ENCODE measurements at regions of chr19 and their contacts with region 1.

Region 1: GRCh38 chr19:47035127-47036096 is 13.0 kb downstream of the TMEM160 start:
- DNase-seq: peak; percentile 93
- H3K4me3 ChIP-seq: peak overlapping the region; percentile 70
- H3K27ac ChIP-seq: peak overlapping the region; percentile 86
- H3K4me1 ChIP-seq: peaks cover 20% of the 10 kb centered on the region
- CTCF ChIP-seq: peak; percentile 92

Region 2: GRCh38 chr19:46856050-46857022 is 179.1 kb before region 1 on chr19:
- CTCF ChIA-PET with region 1: no interaction called
- POLR2A ChIA-PET with region 1: no interaction called
- intact Hi-C with region 1: loop called (anchors 1 kb)
- DNase-seq: peak; percentile 93
- H3K4me3 ChIP-seq: peak overlapping the region; percentile 28
- H3K27ac ChIP-seq: peak overlapping the region; percentile 14
- H3K4me1 ChIP-seq: peaks cover 22% of the 10 kb centered on the region
- CTCF ChIP-seq: peak; percentile 85

Region 3: DNA sequence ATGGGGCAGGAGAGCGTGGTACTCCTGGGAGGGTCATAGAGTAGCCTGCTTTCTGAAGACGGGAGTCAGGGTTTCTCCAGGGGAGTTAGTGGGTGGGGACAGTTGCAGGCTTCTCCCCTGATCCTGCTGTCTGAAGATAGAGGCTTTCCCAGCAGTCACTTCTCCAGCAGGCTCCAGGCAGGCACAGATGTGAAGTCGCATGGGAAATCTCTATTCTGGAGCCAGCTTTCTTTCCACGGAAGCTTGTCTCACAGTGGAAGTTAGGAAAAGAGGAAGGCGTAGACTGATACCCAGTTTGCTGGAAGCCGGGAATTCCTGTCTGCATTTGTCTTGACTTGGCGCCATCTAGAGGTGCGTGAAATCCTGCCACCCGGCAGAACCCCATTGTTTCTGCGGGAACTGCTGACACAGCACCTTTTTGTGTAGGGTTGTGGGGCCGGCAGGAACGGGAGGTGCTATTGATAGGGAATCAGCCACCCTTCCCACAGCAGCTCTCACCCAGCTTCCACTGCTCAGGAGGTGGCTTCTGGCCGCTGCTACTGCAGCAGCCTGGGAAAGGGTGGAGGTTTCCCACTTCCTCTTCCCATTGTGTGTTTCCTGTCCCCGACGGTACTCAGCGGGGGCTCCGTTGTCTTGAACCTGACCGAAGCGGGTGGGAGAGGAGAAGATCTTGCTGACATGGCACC is 44.3 kb before region 1 on chr19:
- CTCF ChIA-PET with region 1: no interaction called
- POLR2A ChIA-PET with region 1: no interaction called
- intact Hi-C with region 1: loop called (anchors 2 kb)
- DNase-seq: peak; percentile 68
- H3K4me3 ChIP-seq: no peak overlapping the region
- H3K27ac ChIP-seq: no peak overlapping the region
- H3K4me1 ChIP-seq: peaks cover 14% of the 10 kb centered on the region
- CTCF ChIP-seq: peak; percentile 95

Region 4: DNA sequence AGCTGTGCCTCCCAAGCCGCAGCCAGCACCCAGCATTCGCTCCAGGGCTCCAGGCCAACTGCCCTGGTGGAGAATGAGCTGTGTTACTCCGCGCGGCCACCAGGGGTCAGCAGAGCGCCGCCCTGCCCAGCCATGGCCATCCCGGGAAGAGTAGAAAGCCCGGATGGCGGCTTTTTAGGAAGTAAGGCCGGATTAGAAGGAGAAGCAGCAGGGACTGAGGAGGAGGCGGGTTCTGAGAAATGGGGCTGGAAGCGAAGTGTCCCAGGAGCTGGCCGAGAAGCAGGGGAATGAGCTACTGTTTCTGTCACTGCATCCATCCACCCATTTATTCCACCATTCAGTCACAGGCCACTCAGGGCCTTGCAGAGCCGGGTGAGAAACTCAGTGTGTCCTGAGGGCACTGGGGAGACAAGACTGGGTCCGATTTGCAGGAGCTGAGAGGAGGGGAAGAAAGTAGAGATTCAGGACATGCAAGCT is 22.3 kb before region 1 on chr19:
- CTCF ChIA-PET with region 1: no interaction called
- POLR2A ChIA-PET with region 1: interaction called, 3 read pairs
- intact Hi-C with region 1: loop called (anchors 2 kb)
- DNase-seq: peak; percentile 43
- H3K4me3 ChIP-seq: no peak overlapping the region
- H3K27ac ChIP-seq: no peak overlapping the region
- H3K4me1 ChIP-seq: peaks cover 3% of the 10 kb centered on the region
- CTCF ChIP-seq: peak; percentile 98

Region 5: GRCh38 chr19:47047763-47048405 is 12.5 kb after region 1 on chr19:
- CTCF ChIA-PET with region 1: no interaction called
- POLR2A ChIA-PET with region 1: no interaction called
- intact Hi-C with region 1: no loop called
- DNase-seq: peak; percentile 86
- H3K4me3 ChIP-seq: peak overlapping the region; percentile 89
- H3K27ac ChIP-seq: peak overlapping the region; percentile 36
- H3K4me1 ChIP-seq: peaks cover 12% of the 10 kb centered on the region
- CTCF ChIP-seq: no peak

Measured in OCI-LY7 (cell line).